ENCODE measurements at regions of chr9 and their contacts with region 1.

Region 1: GRCh38 chr9:127916665-127917613 is at the start of gene ST6GALNAC4:
- DNase-seq: peak; percentile 79
- H3K4me3 Mint-ChIP-seq: peak within 1 kb of the TSS; percentile 74
- H3K27ac Mint-ChIP-seq: peak within 1 kb of the TSS; percentile 93
- H3K4me1 Mint-ChIP-seq: peaks cover 27% of the 10 kb centered on the region
- H3K27me3 Mint-ChIP-seq: no peaks in the 10 kb centered on the region
- CTCF ChIP-seq: no peak
- total RNA-seq, gene ST6GALNAC4: 36.3 and 39.5 TPM in 2 replicates

Region 2: DNA sequence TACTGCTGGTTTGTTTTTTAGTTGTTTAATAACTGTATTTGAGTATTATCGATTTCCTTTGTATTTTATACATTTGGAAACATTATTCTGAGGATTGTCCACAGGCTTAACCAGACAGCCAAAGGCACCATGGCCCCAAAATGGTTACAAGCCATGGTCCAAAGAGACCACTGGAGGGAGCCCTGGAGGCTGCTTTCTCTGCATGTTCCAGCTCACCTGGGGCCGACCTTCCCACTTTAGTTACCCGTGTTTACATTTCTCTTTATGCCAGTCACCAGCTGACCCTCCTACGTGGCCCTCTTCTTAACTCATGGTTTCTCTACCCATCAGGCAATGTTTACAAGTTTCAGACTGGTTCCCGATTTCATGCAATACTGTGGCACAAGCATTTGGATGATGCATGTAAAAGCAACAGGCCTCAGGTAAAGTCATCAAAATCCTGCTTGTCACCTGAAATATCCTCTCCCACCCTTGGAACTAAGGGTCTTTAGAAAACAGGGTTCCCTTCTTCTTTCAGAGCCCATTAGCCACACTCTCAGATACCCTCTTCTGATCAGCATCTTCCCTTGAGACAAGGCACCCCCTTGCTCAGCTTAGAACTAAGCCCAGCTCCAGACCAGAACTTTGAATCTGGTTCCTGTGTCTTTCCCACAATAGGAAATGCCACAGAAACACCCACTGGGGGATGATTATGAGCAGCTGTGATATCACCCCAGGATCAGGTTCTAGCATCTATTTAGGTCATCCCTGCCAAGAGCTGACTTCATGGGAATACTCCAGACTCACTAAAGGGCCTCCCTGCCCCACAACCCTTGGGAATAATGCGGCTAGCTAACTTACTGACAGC is 702.3 kb before region 1 on chr9:
- CTCF ChIA-PET with region 1: no interaction called
- POLR2A ChIA-PET with region 1: no interaction called
- intact Hi-C with region 1: loop called (anchors 10 kb)
- DNase-seq: peak; percentile 76
- H3K4me3 Mint-ChIP-seq: no peak overlapping the region
- H3K27ac Mint-ChIP-seq: no peak overlapping the region
- H3K4me1 Mint-ChIP-seq: peaks cover 6% of the 10 kb centered on the region
- H3K27me3 Mint-ChIP-seq: peaks cover 12% of the 10 kb centered on the region
- CTCF ChIP-seq: peak; percentile 73

Region 3: GRCh38 chr9:127742435-127743088 is 174.4 kb before region 1 on chr9:
- CTCF ChIA-PET with region 1: interaction called, 14 read pairs
- POLR2A ChIA-PET with region 1: interaction called, 23 read pairs
- intact Hi-C with region 1: loop called (anchors 1 kb)
- DNase-seq: no peak
- H3K4me3 Mint-ChIP-seq: no peak overlapping the region
- H3K27ac Mint-ChIP-seq: no peak overlapping the region
- H3K4me1 Mint-ChIP-seq: no peaks in the 10 kb centered on the region
- H3K27me3 Mint-ChIP-seq: peaks cover 9% of the 10 kb centered on the region
- CTCF ChIP-seq: no peak

Region 4: DNA sequence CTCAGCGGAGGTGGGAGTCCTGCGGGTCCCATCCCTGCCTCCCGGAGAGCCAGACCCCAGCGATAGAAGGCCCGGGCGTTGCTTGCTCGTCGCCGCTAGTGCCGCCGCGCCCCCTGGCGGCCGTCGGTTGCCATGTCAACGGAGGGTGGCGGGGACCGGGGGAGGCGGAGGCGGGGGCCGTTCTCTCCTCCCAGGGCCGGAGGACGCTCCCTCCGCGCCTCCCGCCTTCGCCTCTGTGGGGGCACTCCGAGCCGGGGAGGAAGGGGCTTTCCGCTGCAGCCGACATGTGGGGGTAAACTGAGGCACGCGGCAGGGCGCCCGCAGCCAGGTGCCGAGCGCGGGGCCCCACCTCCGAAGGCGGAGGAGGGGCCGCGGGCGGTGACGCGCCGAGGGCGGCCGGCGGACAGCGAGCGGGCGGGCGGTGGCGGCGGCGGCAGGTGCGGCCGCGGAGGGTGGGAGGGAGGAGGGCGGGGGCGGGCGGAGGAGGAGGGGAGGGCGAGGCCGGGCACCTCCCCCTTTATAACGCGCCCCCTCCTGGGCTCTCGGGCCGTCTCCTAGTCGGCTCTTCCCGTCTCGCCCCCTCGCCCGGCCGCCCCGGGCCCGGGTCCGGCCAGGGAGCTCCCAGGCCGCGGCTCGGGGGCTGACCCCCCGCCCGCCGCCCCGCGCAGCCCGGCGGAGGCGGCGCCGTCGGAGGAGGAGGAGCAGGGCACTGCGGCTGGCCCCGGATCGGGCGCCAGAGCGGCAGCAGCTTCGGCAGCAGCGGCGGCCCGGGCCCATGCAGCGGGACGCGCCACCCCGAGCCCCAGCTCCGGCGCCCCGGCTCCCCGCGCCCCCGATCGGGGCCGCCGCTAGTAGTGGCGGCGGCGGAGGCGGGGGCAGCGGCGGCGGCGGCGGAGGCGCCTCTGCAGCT is 131.7 kb before region 1 on chr9:
- CTCF ChIA-PET with region 1: interaction called, 14 read pairs
- POLR2A ChIA-PET with region 1: interaction called, 10 read pairs
- intact Hi-C with region 1: loop called (anchors 1 kb)
- DNase-seq: peak; percentile 76
- H3K4me3 Mint-ChIP-seq: peak overlapping the region; percentile 90
- H3K27ac Mint-ChIP-seq: peak overlapping the region; percentile 63
- H3K4me1 Mint-ChIP-seq: peaks cover 9% of the 10 kb centered on the region
- H3K27me3 Mint-ChIP-seq: no peaks in the 10 kb centered on the region
- CTCF ChIP-seq: peak; percentile 92

Region 5: DNA sequence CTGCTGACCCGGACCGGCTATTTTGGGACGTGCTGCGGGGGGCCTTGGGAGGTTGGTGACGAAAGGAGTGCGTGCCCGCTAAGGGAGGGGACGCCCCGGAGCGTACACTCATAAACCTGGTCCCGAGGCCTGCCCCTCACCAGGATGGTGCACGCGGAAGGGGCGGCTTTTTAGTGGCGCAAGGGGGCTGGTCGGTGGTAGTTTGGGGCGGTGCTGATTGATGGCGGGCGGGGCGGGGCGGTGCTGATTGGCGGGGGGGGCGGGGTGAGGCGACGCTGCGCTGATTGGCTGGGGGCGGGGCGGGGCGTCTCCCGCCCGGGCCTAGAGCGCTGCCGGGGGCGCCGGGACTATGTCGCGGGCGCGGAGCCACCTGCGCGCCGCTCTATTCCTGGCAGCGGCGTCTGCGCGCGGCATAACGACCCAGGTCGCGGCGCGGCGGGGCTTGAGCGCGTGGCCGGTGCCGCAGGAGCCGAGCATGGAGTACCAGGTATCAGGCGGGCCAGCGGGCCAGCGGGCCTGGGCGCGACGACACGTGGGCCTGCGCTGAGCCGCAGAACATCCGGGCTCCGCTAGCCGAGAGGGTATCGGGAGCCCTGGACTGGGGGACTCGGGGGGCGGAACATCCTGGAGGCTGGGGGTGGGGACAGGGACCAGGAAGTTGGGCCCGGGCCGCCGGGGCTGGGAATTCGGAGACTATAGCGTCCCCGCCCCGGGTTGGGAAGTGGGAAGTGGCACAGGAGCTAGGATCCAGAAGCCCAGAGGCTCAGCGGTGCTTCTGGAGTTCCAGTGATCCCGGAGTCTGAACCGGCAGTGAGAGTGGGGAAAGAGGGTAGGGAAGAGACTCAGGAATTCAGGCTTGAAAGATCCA is 114.1 kb before region 1 on chr9 and contains the start of gene FPGS:
- CTCF ChIA-PET with region 1: interaction called, 4 read pairs
- POLR2A ChIA-PET with region 1: interaction called, 7 read pairs
- intact Hi-C with region 1: loop called (anchors 5 kb)
- DNase-seq: peak; percentile 80
- H3K4me3 Mint-ChIP-seq: peak within 1 kb of the TSS; percentile 87
- H3K27ac Mint-ChIP-seq: peak within 1 kb of the TSS; percentile 96
- H3K4me1 Mint-ChIP-seq: peaks cover 18% of the 10 kb centered on the region
- H3K27me3 Mint-ChIP-seq: no peaks in the 10 kb centered on the region
- CTCF ChIP-seq: no peak
- total RNA-seq, gene FPGS: 130 and 131 TPM in 2 replicates

Region 6: DNA sequence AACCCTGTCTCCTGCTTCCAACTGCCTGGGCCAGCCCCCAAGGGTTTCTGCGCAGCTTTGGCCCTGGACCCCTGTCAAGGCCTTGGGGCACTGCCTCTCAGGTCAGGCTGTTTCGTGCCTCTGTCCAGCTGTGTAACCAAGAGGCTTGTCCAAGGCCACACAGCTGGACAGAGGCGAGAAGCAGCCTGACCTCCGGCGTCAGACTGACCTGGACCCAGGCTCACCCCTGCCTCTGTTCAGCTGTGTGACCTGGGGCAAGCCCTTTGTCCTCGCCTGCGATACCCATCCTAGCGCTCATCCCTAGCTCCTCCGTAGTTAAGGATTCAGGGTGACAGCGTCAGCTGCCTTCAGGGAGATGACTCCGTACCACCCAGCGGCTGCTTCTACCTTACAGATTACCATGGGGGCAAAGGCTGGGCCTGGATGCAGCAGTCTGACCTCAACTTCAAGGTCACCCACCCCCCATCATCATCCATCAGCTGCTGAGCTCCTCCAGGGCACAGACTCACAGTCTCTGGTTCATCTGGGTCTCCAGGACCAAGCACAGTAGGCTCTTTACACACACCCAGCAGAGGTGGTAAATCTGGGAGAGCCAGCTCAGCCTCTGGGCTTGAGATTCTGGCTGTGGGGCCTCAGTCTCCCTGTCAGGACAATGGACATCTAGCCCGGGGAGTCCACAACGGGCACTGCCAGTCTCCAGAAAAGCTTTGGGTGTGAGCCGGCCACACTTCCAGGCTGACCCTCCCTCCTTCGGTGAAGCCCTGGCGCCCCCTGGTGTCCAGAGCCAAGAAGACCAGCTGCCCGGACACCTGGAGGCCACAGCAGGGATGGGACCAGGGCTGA is 47.4 kb before region 1 on chr9:
- CTCF ChIA-PET with region 1: interaction called, 13 read pairs
- POLR2A ChIA-PET with region 1: interaction called, 3 read pairs
- intact Hi-C with region 1: loop called (anchors 1 kb)
- DNase-seq: peak; percentile 89
- H3K4me3 Mint-ChIP-seq: no peak overlapping the region
- H3K27ac Mint-ChIP-seq: no peak overlapping the region
- H3K4me1 Mint-ChIP-seq: no peaks in the 10 kb centered on the region
- H3K27me3 Mint-ChIP-seq: no peaks in the 10 kb centered on the region
- CTCF ChIP-seq: peak; percentile 86

Region 7: GRCh38 chr9:127899128-127899946 is 17.6 kb before region 1 on chr9 and contains the start of gene ST6GALNAC6:
- CTCF ChIA-PET with region 1: interaction called, 3 read pairs
- POLR2A ChIA-PET with region 1: interaction called, 35 read pairs
- intact Hi-C with region 1: no loop called
- DNase-seq: peak; percentile 68
- H3K4me3 Mint-ChIP-seq: peak within 1 kb of the TSS; percentile 77
- H3K27ac Mint-ChIP-seq: peak within 1 kb of the TSS; percentile 80
- H3K4me1 Mint-ChIP-seq: peaks cover 9% of the 10 kb centered on the region
- H3K27me3 Mint-ChIP-seq: no peaks in the 10 kb centered on the region
- CTCF ChIP-seq: no peak
- total RNA-seq, gene ST6GALNAC6: 16.5 and 17.6 TPM in 2 replicates

Region 8: DNA sequence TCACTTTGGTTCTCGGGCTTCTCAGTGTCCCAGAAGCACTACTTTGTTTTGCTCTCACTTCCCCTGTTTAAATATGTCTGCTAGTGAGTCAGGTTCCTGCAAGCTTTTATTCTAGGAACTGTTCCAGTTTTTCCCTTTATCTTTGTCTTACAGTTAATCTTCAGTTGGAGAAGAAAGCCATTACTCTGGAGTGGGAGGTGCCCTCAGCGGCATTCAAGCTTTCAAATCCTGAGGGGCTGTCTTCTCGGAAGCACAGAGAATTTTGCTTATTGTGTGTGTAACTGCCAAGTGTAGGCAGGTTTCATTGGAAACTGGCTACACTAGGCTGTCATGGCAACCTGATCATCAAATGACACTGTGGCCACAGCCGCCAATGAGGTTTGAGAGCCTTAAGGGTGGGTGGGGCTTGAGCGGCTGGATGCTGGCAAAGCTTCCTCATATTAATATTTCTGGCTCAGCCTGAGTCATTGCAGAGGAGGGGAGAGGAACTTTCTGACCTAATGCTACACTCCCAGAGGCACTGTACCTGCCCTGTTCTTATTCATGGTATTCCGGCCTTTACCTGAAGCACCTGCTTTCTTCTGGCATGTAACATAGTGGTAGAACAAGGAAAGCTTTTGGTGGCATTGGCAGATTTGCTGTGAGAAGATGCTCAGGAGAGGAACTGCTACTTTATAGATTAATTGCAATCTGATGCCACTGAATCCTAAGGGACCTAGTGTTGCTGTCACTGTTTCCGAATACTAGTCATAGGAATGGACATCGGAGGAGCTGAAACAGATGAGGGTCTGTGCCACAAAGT is 177.4 kb after region 1 on chr9:
- CTCF ChIA-PET with region 1: no interaction called
- POLR2A ChIA-PET with region 1: no interaction called
- intact Hi-C with region 1: no loop called
- DNase-seq: peak; percentile 99
- H3K4me3 Mint-ChIP-seq: peak overlapping the region; percentile 66
- H3K27ac Mint-ChIP-seq: peak overlapping the region; percentile 99
- H3K4me1 Mint-ChIP-seq: peaks cover 21% of the 10 kb centered on the region
- H3K27me3 Mint-ChIP-seq: no peaks in the 10 kb centered on the region
- CTCF ChIP-seq: no peak